ENCODE measurements at regions of chr11 and their contacts with region 1.

Region 1: DNA sequence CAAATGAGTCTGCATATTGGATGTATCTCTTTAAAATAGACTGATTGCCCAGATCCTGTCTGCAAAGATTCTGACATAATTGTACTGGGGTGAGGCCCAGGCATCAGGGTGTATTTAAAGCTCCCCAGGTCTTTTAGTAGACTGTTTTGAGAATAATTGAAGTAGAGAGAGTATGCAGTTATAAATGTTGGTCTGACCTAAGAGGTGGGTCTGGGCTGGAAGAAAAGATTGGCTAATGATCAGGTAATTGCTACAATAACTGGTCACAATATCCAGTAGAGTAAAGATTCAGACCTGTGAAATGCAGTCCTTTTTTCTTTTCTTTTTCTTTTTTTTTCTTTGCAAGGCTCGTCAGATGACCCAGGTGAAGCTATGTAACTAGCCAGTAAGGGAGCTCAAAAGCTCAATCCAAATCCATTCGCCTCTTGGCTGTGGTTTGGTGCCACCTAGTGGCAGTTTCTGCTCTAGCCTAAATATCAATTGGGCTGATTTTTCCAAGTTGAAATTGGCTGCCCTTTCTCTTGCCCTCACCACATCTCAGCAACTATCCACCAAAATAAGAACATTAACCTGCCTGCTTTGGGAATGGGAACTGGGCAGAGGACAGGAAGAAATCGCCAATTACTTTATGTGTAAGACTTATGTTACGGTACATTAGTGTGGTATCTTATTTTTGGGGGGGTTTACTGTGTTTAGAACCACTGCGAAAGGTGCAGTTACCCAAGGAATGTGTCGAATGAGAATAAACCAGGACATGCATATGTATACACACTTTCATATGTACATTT is 45.9 kb downstream of the ZNF143 start:
- DNase-seq: peak; percentile 78 to 86
- H3K4me3 ChIP-seq: no peak overlapping the region
- H3K4me3 Mint-ChIP-seq: no peak overlapping the region
- H3K27ac Mint-ChIP-seq: peak overlapping the region; percentile 75
- H3K4me1 ChIP-seq: peaks cover 46% of the 10 kb centered on the region
- H3K4me1 Mint-ChIP-seq: peaks cover 29% of the 10 kb centered on the region
- H3K27me3 ChIP-seq: no peaks in the 10 kb centered on the region
- H3K27me3 Mint-ChIP-seq: no peaks in the 10 kb centered on the region
- CTCF ChIP-seq: peak; percentile 81 to 86

Region 2: DNA sequence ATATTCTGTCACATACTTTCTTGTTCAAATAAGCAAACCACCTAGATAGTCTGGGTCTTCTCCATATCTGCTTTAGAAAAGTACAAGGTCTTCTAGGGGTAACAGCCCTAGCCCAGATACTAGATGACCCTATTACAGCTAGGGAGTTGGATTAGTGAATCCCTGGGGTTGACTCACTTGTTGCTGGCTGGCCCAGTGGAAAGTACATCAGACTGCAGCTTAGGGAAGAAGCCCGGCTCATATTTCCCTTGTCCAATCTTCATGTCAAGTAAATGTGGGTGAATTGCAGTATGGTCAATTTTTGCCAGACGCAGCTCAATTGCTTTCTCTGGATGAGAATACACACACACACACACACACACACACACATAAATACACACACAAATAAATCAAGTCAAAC is 336.2 kb before region 1 on chr11:
- CTCF ChIA-PET with region 1: interaction called, 5 read pairs
- POLR2A ChIA-PET with region 1: no interaction called
- intact Hi-C with region 1: loop called (anchors 5 kb)
- DNase-seq: no peak
- H3K4me3 ChIP-seq: no peak overlapping the region
- H3K4me3 Mint-ChIP-seq: no peak overlapping the region
- H3K27ac Mint-ChIP-seq: no peak overlapping the region
- H3K4me1 ChIP-seq: no peaks in the 10 kb centered on the region
- H3K4me1 Mint-ChIP-seq: peaks cover 13% of the 10 kb centered on the region
- H3K27me3 ChIP-seq: no peaks in the 10 kb centered on the region
- H3K27me3 Mint-ChIP-seq: no peaks in the 10 kb centered on the region
- CTCF ChIP-seq: no peak

Region 3: GRCh38 chr11:9276531-9276930 is 230.2 kb before region 1 on chr11:
- CTCF ChIA-PET with region 1: interaction called, 12 read pairs
- POLR2A ChIA-PET with region 1: no interaction called
- intact Hi-C with region 1: loop called (anchors 5 kb)
- DNase-seq: peak in 1 of 2 experiments; percentile 27
- H3K4me3 ChIP-seq: no peak overlapping the region
- H3K4me3 Mint-ChIP-seq: no peak overlapping the region
- H3K27ac Mint-ChIP-seq: no peak overlapping the region
- H3K4me1 ChIP-seq: no peaks in the 10 kb centered on the region
- H3K4me1 Mint-ChIP-seq: no peaks in the 10 kb centered on the region
- H3K27me3 ChIP-seq: no peaks in the 10 kb centered on the region
- H3K27me3 Mint-ChIP-seq: no peaks in the 10 kb centered on the region
- CTCF ChIP-seq: peak in 1 of 2 experiments; percentile 10

Region 4: DNA sequence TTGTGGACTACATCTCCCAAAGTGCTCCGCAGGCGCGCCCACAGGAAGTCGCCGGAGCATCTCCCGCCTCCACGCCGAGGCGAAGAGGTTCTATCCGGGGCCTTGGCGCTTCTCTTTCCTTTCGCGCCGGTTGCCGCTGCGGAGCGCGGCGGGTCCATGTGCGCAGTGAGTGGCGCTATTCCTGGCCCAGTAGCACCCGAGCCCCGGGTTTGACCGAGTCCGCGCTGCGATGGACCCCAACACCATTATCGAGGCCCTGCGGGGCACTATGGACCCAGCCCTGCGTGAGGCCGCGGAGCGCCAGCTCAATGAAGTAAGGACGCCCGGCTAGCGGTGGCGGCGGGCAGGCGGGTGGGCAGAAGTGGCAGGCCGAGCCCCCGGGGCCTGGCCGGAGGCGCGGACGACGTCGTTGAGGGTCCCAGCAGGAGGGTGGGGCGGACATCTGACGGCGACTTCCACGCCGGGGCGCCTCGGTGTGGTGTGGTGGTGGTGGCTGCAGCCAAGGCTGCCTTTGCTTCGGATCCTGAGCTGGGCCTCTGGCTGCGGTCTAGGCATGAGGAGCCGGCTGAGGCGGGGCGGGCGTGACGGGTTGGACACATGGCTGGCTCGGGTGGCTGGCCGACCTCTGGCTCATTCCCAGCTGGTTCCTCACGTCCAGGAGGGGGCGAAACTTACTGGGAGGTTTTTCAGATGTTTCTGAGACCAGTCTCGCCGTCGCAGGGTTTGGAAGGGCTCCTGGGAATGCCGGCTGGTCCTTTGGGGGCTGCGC is 122.0 kb before region 1 on chr11 and contains the start of gene IPO7:
- CTCF ChIA-PET with region 1: interaction called, 12 read pairs
- POLR2A ChIA-PET with region 1: interaction called, 5 read pairs
- intact Hi-C with region 1: no loop called
- DNase-seq: peak; percentile 92 to 93
- H3K4me3 ChIP-seq: peak within 1 kb of the TSS; percentile 90
- H3K4me3 Mint-ChIP-seq: peak within 1 kb of the TSS; percentile 94
- H3K27ac Mint-ChIP-seq: peak within 1 kb of the TSS; percentile 98
- H3K4me1 ChIP-seq: peaks cover 30% of the 10 kb centered on the region
- H3K4me1 Mint-ChIP-seq: peaks cover 29% of the 10 kb centered on the region
- H3K27me3 ChIP-seq: no peaks in the 10 kb centered on the region
- H3K27me3 Mint-ChIP-seq: no peaks in the 10 kb centered on the region
- CTCF ChIP-seq: peak; percentile 20 to 44
- total RNA-seq, gene IPO7: 196 and 199 TPM in 2 replicates

Region 5: GRCh38 chr11:9460322-9461067 is 46.2 kb before region 1 on chr11 and contains the start of gene ZNF143:
- CTCF ChIA-PET with region 1: interaction called, 34 read pairs
- POLR2A ChIA-PET with region 1: interaction called, 28 read pairs
- intact Hi-C with region 1: loop called (anchors 1 kb)
- DNase-seq: peak; percentile 100
- H3K4me3 ChIP-seq: peak within 1 kb of the TSS; percentile 83
- H3K4me3 Mint-ChIP-seq: peak within 1 kb of the TSS; percentile 96
- H3K27ac Mint-ChIP-seq: peak within 1 kb of the TSS; percentile 99
- H3K4me1 ChIP-seq: peaks cover 17% of the 10 kb centered on the region
- H3K4me1 Mint-ChIP-seq: peaks cover 7% of the 10 kb centered on the region
- H3K27me3 ChIP-seq: no peaks in the 10 kb centered on the region
- H3K27me3 Mint-ChIP-seq: no peaks in the 10 kb centered on the region
- CTCF ChIP-seq: no peak
- total RNA-seq, gene ZNF143: 27.2 and 31.2 TPM in 2 replicates

Region 6: DNA sequence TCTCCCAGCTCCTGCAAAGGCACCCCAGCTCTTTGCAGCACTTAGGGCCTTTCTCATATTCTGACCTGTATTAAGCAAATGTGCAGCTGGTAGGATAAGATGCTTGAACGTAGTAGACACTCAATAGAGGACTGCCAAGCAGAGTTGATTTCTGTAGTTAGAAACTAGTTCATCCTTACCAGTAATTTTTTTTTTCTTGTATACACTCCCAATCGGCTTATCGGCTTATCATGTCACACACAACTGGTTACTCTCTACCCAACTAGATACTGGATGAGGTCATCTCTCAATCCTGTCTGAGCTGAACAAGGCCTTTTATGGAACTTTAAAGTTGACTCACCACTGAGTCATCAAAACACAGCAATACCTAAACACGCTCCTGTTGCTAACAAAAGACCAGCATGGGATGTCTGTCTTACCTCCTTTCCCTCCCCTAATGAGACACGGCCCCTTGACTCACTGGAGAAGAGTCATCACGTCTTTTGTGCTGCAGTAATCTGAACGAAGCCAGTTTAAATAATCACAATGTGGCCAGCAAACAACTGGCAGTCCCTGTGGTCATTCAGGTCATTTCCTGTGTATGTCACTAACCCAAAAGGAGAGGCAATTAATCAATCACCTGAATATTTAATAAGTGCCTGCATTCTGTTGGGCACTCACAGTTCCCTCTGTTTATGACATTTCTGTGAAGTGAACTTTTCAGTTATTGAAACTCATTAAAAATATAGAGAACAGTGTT is 59.3 kb after region 1 on chr11:
- CTCF ChIA-PET with region 1: interaction called, 4 read pairs
- POLR2A ChIA-PET with region 1: interaction called, 4 read pairs
- intact Hi-C with region 1: loop called (anchors 1 kb)
- DNase-seq: peak; percentile 90 to 91
- H3K4me3 ChIP-seq: no peak overlapping the region
- H3K4me3 Mint-ChIP-seq: peak overlapping the region; percentile 57
- H3K27ac Mint-ChIP-seq: peak overlapping the region; percentile 100
- H3K4me1 ChIP-seq: peaks cover 56% of the 10 kb centered on the region
- H3K4me1 Mint-ChIP-seq: peaks cover 54% of the 10 kb centered on the region
- H3K27me3 ChIP-seq: no peaks in the 10 kb centered on the region
- H3K27me3 Mint-ChIP-seq: no peaks in the 10 kb centered on the region
- CTCF ChIP-seq: no peak

Region 7: GRCh38 chr11:9613118-9613829 is 106.6 kb after region 1 on chr11:
- CTCF ChIA-PET with region 1: interaction called, 10 read pairs
- POLR2A ChIA-PET with region 1: no interaction called
- intact Hi-C with region 1: loop called (anchors 1 kb)
- DNase-seq: peak; percentile 97 to 99
- H3K4me3 ChIP-seq: peak overlapping the region; percentile 43
- H3K4me3 Mint-ChIP-seq: peak overlapping the region; percentile 93
- H3K27ac Mint-ChIP-seq: peak overlapping the region; percentile 98
- H3K4me1 ChIP-seq: peaks cover 33% of the 10 kb centered on the region
- H3K4me1 Mint-ChIP-seq: peaks cover 37% of the 10 kb centered on the region
- H3K27me3 ChIP-seq: no peaks in the 10 kb centered on the region
- H3K27me3 Mint-ChIP-seq: no peaks in the 10 kb centered on the region
- CTCF ChIP-seq: peak; percentile 86 to 98